GM10248 (cell line): ENCODE measurements at regions of chr11 and their contacts with region 1.

Region 1: DNA sequence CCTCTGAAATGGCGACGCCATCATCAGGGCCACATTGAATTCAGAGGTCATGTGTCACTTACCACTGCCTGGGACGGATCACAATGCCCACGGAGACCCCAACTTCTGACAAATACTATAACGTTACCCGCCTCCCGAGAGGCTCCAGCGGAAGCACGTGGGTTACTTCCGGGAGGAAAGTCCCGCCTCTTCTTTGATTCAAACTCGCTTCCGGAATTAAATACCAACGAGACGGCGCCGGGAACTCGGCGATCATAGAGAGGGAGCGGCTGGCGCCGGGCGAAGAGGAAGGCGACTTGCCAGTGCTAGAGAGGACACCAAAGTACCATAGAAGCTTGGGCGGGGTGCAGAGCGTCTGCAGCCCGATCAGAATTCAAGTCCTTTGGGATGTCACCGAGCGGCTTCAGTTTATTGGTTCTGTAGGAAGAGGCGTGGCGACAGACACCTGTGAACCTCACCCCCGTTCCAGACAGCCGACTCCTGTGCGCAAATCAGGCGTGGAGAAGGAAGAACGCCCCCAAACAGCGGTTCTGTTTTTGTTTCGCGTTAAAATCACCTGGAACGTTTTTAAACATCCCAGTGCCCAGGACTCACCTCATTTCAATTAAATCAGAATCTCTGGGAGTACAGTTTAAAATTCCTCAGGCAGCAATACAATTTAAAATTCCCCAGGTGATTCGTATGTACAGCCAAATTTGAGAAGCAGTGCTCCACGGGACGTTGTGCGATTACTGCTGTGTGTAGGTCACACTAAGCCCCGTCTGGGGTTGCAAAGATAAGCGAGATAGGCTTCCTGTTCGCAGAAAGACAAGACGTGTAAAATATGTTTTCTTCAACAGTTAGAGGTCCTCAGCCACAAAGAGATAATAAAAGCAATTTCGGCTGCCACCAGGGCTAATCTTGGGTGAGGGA is at the start of gene TIMM10:
- DNase-seq: peak; percentile 92
- CTCF ChIP-seq: no peak

Region 2: GRCh38 chr11:57474017-57474802 is 56.6 kb before region 1 on chr11:
- CTCF ChIA-PET with region 1: interaction called, 19 read pairs
- POLR2A ChIA-PET with region 1: no interaction called
- DNase-seq: no peak
- CTCF ChIP-seq: no peak

Region 3: GRCh38 chr11:57487920-57488659 is 42.8 kb before region 1 on chr11:
- CTCF ChIA-PET with region 1: interaction called, 247 read pairs
- POLR2A ChIA-PET with region 1: no interaction called
- DNase-seq: no peak
- CTCF ChIP-seq: no peak

Region 4: DNA sequence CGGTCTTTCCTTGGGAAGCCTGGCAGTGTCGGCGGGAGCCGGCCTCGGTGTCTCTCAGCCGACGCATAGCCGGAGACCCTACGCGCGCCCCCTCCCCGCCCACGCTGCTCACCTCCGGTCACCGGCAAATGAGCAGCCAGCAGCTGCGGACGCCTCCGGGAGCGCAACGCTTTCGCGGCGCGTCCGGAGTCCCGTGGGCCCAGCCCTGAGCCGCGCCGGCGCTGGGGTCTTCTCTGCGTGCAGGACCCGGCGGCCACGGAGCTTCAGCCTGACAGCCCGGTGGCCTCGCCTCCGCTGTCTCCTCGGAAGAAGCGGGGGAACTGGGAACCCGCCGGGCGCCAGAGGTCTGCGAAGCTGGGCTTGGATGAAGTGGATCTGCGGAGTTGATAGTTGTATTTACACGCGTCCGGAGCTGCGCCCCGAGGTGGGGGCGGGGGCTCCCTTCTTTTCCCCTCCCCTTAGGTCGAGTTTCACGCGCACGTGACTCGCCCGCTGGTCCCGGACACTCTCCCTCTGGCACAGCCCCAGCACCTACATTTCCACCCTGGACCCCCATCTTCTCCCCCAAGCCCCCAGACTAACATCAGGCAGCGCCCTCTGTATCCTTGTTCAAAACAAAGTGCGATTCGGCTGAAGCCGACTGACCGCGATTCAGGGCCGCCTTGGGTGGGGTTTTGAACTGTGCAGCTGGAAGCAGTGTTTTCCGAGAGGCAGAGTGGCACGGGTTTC is 15.4 kb before region 1 on chr11 and contains the start of gene SLC43A1:
- CTCF ChIA-PET with region 1: interaction called, 114 read pairs
- POLR2A ChIA-PET with region 1: no interaction called
- DNase-seq: peak; percentile 66
- CTCF ChIP-seq: no peak